Naive thymus-derived CD4-positive, alpha-beta T cell (primary cell): ENCODE measurements at regions of chr10 and their contacts with region 1.

Region 1: DNA sequence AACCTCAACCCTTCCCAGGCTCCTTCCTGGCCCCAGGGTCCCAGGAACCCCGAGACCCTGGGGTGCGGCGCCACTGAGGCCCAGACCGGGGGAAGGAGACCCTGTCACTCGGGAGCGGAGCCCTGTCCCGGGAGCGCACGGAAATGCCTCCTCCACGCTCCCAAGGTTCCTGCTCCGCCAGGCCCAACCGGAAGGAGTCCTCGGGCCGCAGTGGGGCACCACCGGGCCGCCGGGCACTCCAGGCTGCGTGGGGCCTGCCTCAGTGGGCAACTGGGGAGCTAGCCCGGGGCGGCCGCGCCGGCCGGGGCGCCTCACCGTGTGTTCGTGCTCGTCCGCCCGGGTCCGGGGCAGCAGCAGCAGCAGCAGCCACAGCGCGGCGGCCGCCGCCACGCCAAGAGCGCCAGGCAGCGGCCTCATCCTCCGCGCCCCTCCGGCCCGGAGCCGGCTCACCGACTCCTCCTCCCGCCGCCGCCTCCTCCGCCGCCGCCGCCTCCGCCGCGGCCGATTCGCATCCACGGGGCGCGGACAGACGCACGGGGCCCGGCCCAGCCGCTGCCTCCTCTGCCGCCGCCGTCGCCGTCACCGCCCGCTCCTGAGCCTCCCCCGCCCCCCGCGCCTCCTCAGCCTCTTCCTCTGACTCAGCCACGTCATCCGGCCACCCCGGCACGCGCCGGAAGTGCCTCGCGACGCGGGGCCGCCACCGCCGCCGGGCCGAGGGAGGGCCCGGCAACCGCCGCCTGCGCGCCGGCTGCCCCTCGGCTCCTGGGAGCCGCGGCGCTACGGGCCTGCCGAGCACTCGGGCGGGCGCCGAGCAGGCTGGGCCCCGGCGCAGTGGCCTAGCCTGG is at the start of gene TM9SF3:
- DNase-seq: peak; percentile 86 to 91 (median 89)
- ATAC-seq: peak; percentile 93
- H3K4me3 ChIP-seq: peak within 1 kb of the TSS; percentile 83
- H3K4me3 Mint-ChIP-seq: peak within 1 kb of the TSS in 8 of 10 donors; percentile 82 to 97 (median 92)
- H3K27ac ChIP-seq: peak within 1 kb of the TSS; percentile 100
- H3K27ac Mint-ChIP-seq: peak within 1 kb of the TSS in 8 of 9 donors; percentile 89 to 99 (median 95)
- H3K4me1 ChIP-seq: peaks cover 28 to 32% of the 10 kb centered on the region in 2 donors
- H3K4me1 Mint-ChIP-seq: peaks cover 26 to 47% (median 40%) of the 10 kb centered on the region in 7 donors
- H3K27me3 ChIP-seq: no peaks in the 10 kb centered on the region
- H3K27me3 Mint-ChIP-seq: peaks cover 0 to 13% (median 0%) of the 10 kb centered on the region in 5 donors
- total RNA-seq, gene TM9SF3: 76.7 to 94.0 (median 83.5) TPM

Region 2: GRCh38 chr10:95561182-95562075 is 1025.2 kb before region 1 on chr10 and contains the start of gene SORBS1:
- CTCF ChIA-PET with region 1: no interaction called
- POLR2A ChIA-PET with region 1: no interaction called
- intact Hi-C with region 1: loop called in 1 of 2 experiments (anchors 5 kb)
- DNase-seq: peak; percentile 80 to 88 (median 82)
- ATAC-seq: peak; percentile 99
- H3K4me3 ChIP-seq: peak within 1 kb of the TSS; percentile 90
- H3K4me3 Mint-ChIP-seq: peak within 1 kb of the TSS; percentile 96 to 100 (median 99)
- H3K27ac ChIP-seq: peak within 1 kb of the TSS; percentile 66
- H3K27ac Mint-ChIP-seq: peak within 1 kb of the TSS; percentile 76 to 97 (median 89)
- H3K4me1 ChIP-seq: peaks cover 4% of the 10 kb centered on the region in 2 donors
- H3K4me1 Mint-ChIP-seq: peaks cover 7 to 16% (median 11%) of the 10 kb centered on the region in 7 donors
- H3K27me3 ChIP-seq: no peaks in the 10 kb centered on the region
- H3K27me3 Mint-ChIP-seq: peaks cover 0 to 63% (median 5%) of the 10 kb centered on the region in 5 donors
- total RNA-seq, gene SORBS1: 0.58 to 1.9 (median 1.4) TPM

Region 3: DNA sequence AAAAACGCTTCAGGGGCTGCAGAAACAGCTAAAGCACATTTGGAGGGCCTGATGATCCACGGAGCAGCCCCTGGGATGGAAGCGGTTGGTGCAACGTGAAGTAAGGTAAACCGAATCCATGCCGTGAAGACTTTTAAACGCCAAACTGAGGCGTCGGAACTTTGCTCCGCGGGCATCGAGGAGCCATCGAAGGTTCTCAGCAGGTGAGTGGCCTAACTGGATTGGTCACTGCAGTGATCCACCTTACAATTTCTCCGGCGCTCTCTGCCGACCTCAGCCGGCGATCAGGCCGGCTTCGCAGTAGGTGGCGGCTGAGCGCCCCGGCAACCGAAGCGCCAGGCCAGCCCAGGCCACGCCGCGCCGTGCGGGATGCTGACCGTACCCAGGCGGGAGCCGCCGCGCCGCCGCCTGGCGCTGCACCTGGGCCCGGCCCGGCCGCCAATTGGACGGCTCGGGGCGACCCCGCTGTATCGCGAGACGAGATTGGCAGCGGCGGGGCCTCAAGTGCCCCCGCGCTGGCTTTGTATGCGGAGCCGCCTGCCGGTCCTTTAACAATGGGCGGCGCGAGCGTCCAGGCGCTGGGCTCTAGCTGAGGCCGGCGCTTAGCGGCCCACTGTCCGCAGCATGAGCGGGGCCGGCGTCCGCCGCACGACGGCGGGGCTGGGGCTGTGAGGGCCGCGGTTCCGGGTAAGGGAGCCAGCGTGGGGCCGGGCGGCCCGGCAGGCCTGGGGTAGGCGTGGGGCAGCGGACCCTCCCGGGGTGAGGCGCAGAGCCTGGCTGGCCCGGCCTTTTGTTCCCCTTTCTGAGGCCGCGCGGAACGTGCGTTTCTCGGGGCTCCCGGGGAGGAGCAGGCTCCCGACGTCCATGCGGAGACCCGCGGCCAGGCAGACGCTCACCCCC is 543.4 kb before region 1 on chr10 and contains the start of gene CCNJ:
- CTCF ChIA-PET with region 1: no interaction called
- POLR2A ChIA-PET with region 1: interaction called, 4 read pairs
- intact Hi-C with region 1: loop called in 1 of 2 experiments (anchors 2 kb)
- DNase-seq: peak; percentile 76 to 87 (median 83)
- ATAC-seq: peak; percentile 91
- H3K4me3 ChIP-seq: peak within 1 kb of the TSS; percentile 78
- H3K4me3 Mint-ChIP-seq: peak within 1 kb of the TSS; percentile 83 to 96 (median 92)
- H3K27ac ChIP-seq: peak within 1 kb of the TSS; percentile 81
- H3K27ac Mint-ChIP-seq: peak within 1 kb of the TSS; percentile 80 to 96 (median 87)
- H3K4me1 ChIP-seq: peaks cover 13 to 16% of the 10 kb centered on the region in 2 donors
- H3K4me1 Mint-ChIP-seq: peaks cover 32 to 50% (median 44%) of the 10 kb centered on the region in 7 donors
- H3K27me3 ChIP-seq: peaks cover 3 to 4% of the 10 kb centered on the region in 2 donors
- H3K27me3 Mint-ChIP-seq: peaks cover 4 to 11% (median 8%) of the 10 kb centered on the region in 5 donors
- total RNA-seq, gene CCNJ: 5.6 to 8.0 (median 6.7) TPM

Region 4: GRCh38 chr10:96374985-96375830 is 211.4 kb before region 1 on chr10:
- CTCF ChIA-PET with region 1: no interaction called
- POLR2A ChIA-PET with region 1: no interaction called
- intact Hi-C with region 1: loop called in 1 of 2 experiments (anchors 10 kb)
- DNase-seq: peak; percentile 23 to 75 (median 58)
- ATAC-seq: peak; percentile 92
- H3K4me3 ChIP-seq: peak overlapping the region; percentile 68
- H3K4me3 Mint-ChIP-seq: peak overlapping the region; percentile 60 to 90 (median 83)
- H3K27ac ChIP-seq: no peak overlapping the region
- H3K27ac Mint-ChIP-seq: peak overlapping the region in 1 of 9 donors; percentile 6
- H3K4me1 ChIP-seq: no peaks in the 10 kb centered on the region
- H3K4me1 Mint-ChIP-seq: peaks cover 0 to 14% (median 6%) of the 10 kb centered on the region in 7 donors
- H3K27me3 ChIP-seq: no peaks in the 10 kb centered on the region
- H3K27me3 Mint-ChIP-seq: peaks cover 0 to 13% (median 9%) of the 10 kb centered on the region in 5 donors

Region 5: GRCh38 chr10:96610817-96611216 is 24.2 kb after region 1 on chr10:
- CTCF ChIA-PET with region 1: no interaction called
- POLR2A ChIA-PET with region 1: no interaction called
- intact Hi-C with region 1: no loop called
- DNase-seq: no peak
- ATAC-seq: peak; percentile 36
- H3K4me3 ChIP-seq: no peak overlapping the region
- H3K4me3 Mint-ChIP-seq: no peak overlapping the region
- H3K27ac ChIP-seq: no peak overlapping the region
- H3K27ac Mint-ChIP-seq: no peak overlapping the region
- H3K4me1 ChIP-seq: peaks cover 0 to 13% of the 10 kb centered on the region in 2 donors
- H3K4me1 Mint-ChIP-seq: peaks cover 0 to 11% (median 8%) of the 10 kb centered on the region in 7 donors
- H3K27me3 ChIP-seq: no peaks in the 10 kb centered on the region
- H3K27me3 Mint-ChIP-seq: peaks cover 0 to 6% (median 0%) of the 10 kb centered on the region in 5 donors

Region 6: DNA sequence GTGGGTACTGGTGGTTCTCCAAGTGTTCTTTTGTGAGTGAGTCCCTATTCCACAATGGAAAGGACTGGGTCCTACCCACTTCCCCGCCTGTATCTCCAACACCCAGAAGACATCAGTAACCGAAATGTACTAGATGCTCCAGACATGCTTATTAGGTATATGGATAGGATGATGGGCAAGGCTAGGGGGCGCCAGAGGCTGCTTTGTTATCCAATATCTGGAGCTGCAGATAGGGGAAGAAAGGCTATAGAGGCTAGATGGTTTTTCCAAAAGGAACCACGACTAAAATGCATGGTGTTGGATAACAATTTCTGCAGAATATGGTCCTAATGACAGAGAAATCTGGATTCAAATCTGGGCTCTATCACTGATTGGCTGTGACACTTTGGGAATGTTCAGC is 56.3 kb after region 1 on chr10:
- CTCF ChIA-PET with region 1: no interaction called
- POLR2A ChIA-PET with region 1: interaction called, 3 read pairs
- intact Hi-C with region 1: loop called (anchors 5 kb)
- DNase-seq: peak in 2 of 9 donors; percentile 33 to 57
- ATAC-seq: peak; percentile 63
- H3K4me3 ChIP-seq: no peak overlapping the region
- H3K4me3 Mint-ChIP-seq: no peak overlapping the region
- H3K27ac ChIP-seq: no peak overlapping the region
- H3K27ac Mint-ChIP-seq: no peak overlapping the region
- H3K4me1 ChIP-seq: no peaks in the 10 kb centered on the region
- H3K4me1 Mint-ChIP-seq: peaks cover 0 to 22% (median 4%) of the 10 kb centered on the region in 7 donors
- H3K27me3 ChIP-seq: no peaks in the 10 kb centered on the region
- H3K27me3 Mint-ChIP-seq: peaks cover 0 to 8% (median 0%) of the 10 kb centered on the region in 5 donors

Region 7: DNA sequence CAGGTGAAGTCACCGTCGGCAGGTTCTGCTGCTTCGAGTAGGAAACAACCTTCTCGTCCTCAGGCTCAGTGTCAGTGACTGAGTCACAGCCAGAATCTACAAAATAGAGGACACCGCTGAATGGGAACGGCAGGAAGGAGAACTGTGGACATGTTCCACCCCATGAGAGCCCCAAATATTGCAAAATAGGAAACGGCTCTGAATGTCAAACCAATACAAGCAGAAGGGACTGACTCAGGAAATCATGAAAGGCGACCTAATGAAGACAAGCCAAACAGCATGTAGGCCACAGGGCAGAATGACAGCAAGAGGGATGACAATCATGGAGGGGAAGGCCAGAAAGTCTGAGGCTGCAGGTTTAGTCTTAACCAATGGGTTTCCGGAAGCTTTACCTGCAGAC is 70.2 kb after region 1 on chr10:
- CTCF ChIA-PET with region 1: no interaction called
- POLR2A ChIA-PET with region 1: no interaction called
- intact Hi-C with region 1: no loop called
- DNase-seq: no peak
- ATAC-seq: peak; percentile 68
- H3K4me3 ChIP-seq: no peak overlapping the region
- H3K4me3 Mint-ChIP-seq: no peak overlapping the region
- H3K27ac ChIP-seq: no peak overlapping the region
- H3K27ac Mint-ChIP-seq: no peak overlapping the region
- H3K4me1 ChIP-seq: peaks cover under 1 to 2% of the 10 kb centered on the region in 2 donors
- H3K4me1 Mint-ChIP-seq: peaks cover 1 to 20% (median 5%) of the 10 kb centered on the region in 7 donors
- H3K27me3 ChIP-seq: no peaks in the 10 kb centered on the region
- H3K27me3 Mint-ChIP-seq: peaks cover 0 to 4% (median 0%) of the 10 kb centered on the region in 5 donors

Region 8: GRCh38 chr10:96789571-96790108 is 203.0 kb after region 1 on chr10:
- CTCF ChIA-PET with region 1: no interaction called
- POLR2A ChIA-PET with region 1: no interaction called
- intact Hi-C with region 1: no loop called
- DNase-seq: peak in 3 of 9 donors; percentile 39 to 65 (median 57)
- ATAC-seq: peak; percentile 90
- H3K4me3 ChIP-seq: no peak overlapping the region
- H3K4me3 Mint-ChIP-seq: no peak overlapping the region
- H3K27ac ChIP-seq: no peak overlapping the region
- H3K27ac Mint-ChIP-seq: no peak overlapping the region
- H3K4me1 ChIP-seq: no peaks in the 10 kb centered on the region
- H3K4me1 Mint-ChIP-seq: peaks cover 0 to 2% (median 0%) of the 10 kb centered on the region in 7 donors
- H3K27me3 ChIP-seq: no peaks in the 10 kb centered on the region
- H3K27me3 Mint-ChIP-seq: peaks cover 18 to 30% (median 28%) of the 10 kb centered on the region in 5 donors

Region 9: DNA sequence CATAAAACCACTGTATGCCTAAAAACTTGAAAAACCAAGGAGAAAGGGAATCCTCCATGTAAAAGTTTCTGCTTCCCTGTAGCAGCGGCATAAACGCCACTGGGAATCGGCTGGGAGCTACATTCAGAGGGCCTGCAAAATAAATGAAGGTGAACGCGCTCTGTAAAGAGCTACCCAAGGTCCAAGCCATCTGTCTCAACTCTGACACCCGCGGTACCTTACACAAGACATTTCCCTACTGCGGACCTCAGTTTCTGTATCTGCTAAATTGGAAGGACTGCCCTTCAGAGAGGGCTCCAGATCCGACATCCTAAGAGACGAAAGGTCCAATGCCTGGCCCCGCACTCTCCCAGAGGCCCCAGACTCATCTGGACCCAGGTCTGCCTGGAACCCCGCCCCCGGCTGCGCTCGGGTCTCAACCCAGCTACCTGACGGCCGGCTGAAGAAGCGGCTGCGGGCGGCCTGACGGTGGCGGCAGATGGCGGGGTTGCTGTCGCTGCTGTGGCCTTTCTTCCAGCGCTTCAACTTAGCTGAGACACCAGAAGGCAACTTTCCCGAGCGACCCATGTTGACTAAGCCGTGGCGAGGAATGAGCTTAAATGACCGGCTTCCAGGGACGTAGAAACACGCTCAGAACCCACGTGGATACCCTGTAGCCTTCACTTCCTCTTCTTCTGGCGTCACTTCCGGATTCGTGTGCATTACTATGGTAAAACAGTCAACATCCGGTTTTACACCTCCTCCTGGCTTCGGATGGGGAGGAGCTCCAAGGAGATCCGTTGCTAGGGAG is 814.2 kb after region 1 on chr10 and contains the start of gene RRP12:
- CTCF ChIA-PET with region 1: no interaction called
- POLR2A ChIA-PET with region 1: no interaction called
- intact Hi-C with region 1: loop called in 1 of 2 experiments (anchors 10 kb)
- DNase-seq: peak; percentile 47 to 96 (median 92)
- ATAC-seq: peak; percentile 96
- H3K4me3 ChIP-seq: peak within 1 kb of the TSS; percentile 73
- H3K4me3 Mint-ChIP-seq: peak within 1 kb of the TSS; percentile 90 to 97 (median 95)
- H3K27ac ChIP-seq: peak within 1 kb of the TSS; percentile 90
- H3K27ac Mint-ChIP-seq: peak within 1 kb of the TSS; percentile 81 to 99 (median 98)
- H3K4me1 ChIP-seq: peaks cover 13 to 15% of the 10 kb centered on the region in 2 donors
- H3K4me1 Mint-ChIP-seq: peaks cover 6 to 22% (median 17%) of the 10 kb centered on the region in 7 donors
- H3K27me3 ChIP-seq: no peaks in the 10 kb centered on the region
- H3K27me3 Mint-ChIP-seq: no peaks in the 10 kb centered on the region
- total RNA-seq, gene RRP12: 22.0 to 197 (median 32.3) TPM

Region 10: GRCh38 chr10:98134431-98135221 is 1548.0 kb after region 1 on chr10 and contains the start of gene R3HCC1L:
- CTCF ChIA-PET with region 1: no interaction called
- POLR2A ChIA-PET with region 1: no interaction called
- intact Hi-C with region 1: loop called in 1 of 2 experiments (anchors 5 kb)
- DNase-seq: peak; percentile 87 to 95 (median 93)
- ATAC-seq: peak; percentile 98
- H3K4me3 ChIP-seq: peak within 1 kb of the TSS; percentile 91
- H3K4me3 Mint-ChIP-seq: peak within 1 kb of the TSS; percentile 78 to 95 (median 86)
- H3K27ac ChIP-seq: peak within 1 kb of the TSS; percentile 96
- H3K27ac Mint-ChIP-seq: peak within 1 kb of the TSS; percentile 71 to 98 (median 96)
- H3K4me1 ChIP-seq: peaks cover 23 to 27% of the 10 kb centered on the region in 2 donors
- H3K4me1 Mint-ChIP-seq: peaks cover 0 to 53% (median 44%) of the 10 kb centered on the region in 7 donors
- H3K27me3 ChIP-seq: no peaks in the 10 kb centered on the region
- H3K27me3 Mint-ChIP-seq: peaks cover 0 to 2% (median 0%) of the 10 kb centered on the region in 5 donors
- total RNA-seq, gene R3HCC1L: 17.6 to 25.3 (median 20.4) TPM